ENCODE measurements at regions of chr16 and their contacts with region 1.

Region 1: GRCh38 chr16:67260426-67261075 is 11.8 kb downstream of the SLC9A5 start:
- DNase-seq: peak; percentile 69
- H3K4me3 Mint-ChIP-seq: no peak overlapping the region
- H3K27ac Mint-ChIP-seq: no peak overlapping the region
- H3K4me1 Mint-ChIP-seq: peaks cover 8% of the 10 kb centered on the region
- H3K27me3 Mint-ChIP-seq: peaks cover 42% of the 10 kb centered on the region
- CTCF ChIP-seq: peak; percentile 71

Region 2: GRCh38 chr16:65855171-65856145 is 1405.1 kb before region 1 on chr16:
- CTCF ChIA-PET with region 1: no interaction called
- intact Hi-C with region 1: no loop called
- DNase-seq: no peak
- H3K4me3 Mint-ChIP-seq: no peak overlapping the region
- H3K27ac Mint-ChIP-seq: no peak overlapping the region
- H3K4me1 Mint-ChIP-seq: no peaks in the 10 kb centered on the region
- H3K27me3 Mint-ChIP-seq: peaks cover 50% of the 10 kb centered on the region
- CTCF ChIP-seq: no peak

Region 3: DNA sequence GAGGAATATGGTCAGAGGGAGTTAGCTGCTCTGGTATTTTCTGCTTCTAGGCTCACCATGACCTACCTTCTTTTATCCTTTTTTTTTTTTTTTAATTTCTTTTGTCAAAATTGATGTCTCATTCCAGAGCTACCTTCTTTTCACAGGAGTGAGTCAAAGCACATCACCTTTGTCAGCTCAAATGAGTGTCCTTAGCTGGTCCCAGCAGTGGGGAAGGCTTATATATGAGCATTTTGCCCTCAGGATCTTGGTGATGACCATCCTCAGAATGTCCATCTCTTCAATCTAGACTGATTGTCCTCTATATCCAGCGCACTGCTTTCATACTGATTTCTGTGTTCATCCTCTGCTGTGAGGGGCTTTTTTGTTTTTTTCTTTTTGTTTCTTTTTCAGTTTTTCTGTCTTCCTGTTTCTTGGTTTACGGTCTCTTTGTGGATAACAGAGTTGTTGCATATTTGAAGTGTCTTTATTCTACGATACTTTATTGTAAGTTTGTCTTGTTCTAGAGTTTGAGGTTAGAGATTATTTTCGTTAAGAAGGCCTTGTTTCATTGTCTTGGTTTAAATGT is 206.7 kb before region 1 on chr16:
- CTCF ChIA-PET with region 1: no interaction called
- intact Hi-C with region 1: no loop called
- DNase-seq: no peak
- H3K4me3 Mint-ChIP-seq: no peak overlapping the region
- H3K27ac Mint-ChIP-seq: no peak overlapping the region
- H3K4me1 Mint-ChIP-seq: peaks cover 11% of the 10 kb centered on the region
- H3K27me3 Mint-ChIP-seq: no peaks in the 10 kb centered on the region
- CTCF ChIP-seq: no peak

Region 4: GRCh38 chr16:67150833-67151396 is 109.6 kb before region 1 on chr16 and contains the start of gene B3GNT9:
- CTCF ChIA-PET with region 1: no interaction called
- intact Hi-C with region 1: no loop called
- DNase-seq: peak; percentile 54
- H3K4me3 Mint-ChIP-seq: peak within 1 kb of the TSS; percentile 71
- H3K27ac Mint-ChIP-seq: no peak within 1 kb of the TSS
- H3K4me1 Mint-ChIP-seq: peaks cover 4% of the 10 kb centered on the region
- H3K27me3 Mint-ChIP-seq: no peaks in the 10 kb centered on the region
- CTCF ChIP-seq: no peak
- total RNA-seq, gene B3GNT9: 6.8 and 8.0 TPM in 2 replicates

Region 5: GRCh38 chr16:67246934-67247697 is 13.4 kb before region 1 on chr16 and contains the start of gene FHOD1:
- CTCF ChIA-PET with region 1: interaction called, 16 read pairs
- intact Hi-C with region 1: no loop called
- DNase-seq: peak; percentile 99
- H3K4me3 Mint-ChIP-seq: peak within 1 kb of the TSS; percentile 94
- H3K27ac Mint-ChIP-seq: peak within 1 kb of the TSS; percentile 85
- H3K4me1 Mint-ChIP-seq: peaks cover 54% of the 10 kb centered on the region
- H3K27me3 Mint-ChIP-seq: peaks cover 38% of the 10 kb centered on the region
- CTCF ChIP-seq: no peak
- total RNA-seq, gene FHOD1: 37.2 and 37.9 TPM in 2 replicates

Region 6: GRCh38 chr16:67284699-67285646 is 24.4 kb after region 1 on chr16:
- CTCF ChIA-PET with region 1: interaction called, 68 read pairs
- intact Hi-C with region 1: no loop called
- DNase-seq: peak; percentile 86
- H3K4me3 Mint-ChIP-seq: no peak overlapping the region
- H3K27ac Mint-ChIP-seq: no peak overlapping the region
- H3K4me1 Mint-ChIP-seq: peaks cover 9% of the 10 kb centered on the region
- H3K27me3 Mint-ChIP-seq: peaks cover 10% of the 10 kb centered on the region
- CTCF ChIP-seq: peak; percentile 85

Region 7: DNA sequence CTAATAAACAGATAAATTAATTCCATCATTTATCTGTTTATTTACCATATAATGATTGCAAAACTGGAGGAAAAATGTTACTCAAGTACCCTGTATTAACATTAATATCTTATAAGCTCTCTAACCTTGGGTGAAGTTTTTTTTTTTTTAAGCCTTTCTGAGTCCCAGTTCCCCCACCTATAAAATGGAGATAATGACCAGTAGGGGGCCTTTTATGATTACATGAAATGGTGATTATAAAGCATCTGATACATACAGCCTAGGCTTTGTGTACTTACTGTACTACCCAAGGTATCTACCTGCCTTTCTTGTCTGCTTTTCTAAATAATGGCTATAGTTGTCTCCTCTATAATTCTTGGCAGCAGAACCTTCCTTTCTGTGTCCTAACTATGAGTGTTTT is 88.6 kb after region 1 on chr16:
- CTCF ChIA-PET with region 1: interaction called, 12 read pairs
- intact Hi-C with region 1: no loop called
- DNase-seq: no peak
- H3K4me3 Mint-ChIP-seq: no peak overlapping the region
- H3K27ac Mint-ChIP-seq: no peak overlapping the region
- H3K4me1 Mint-ChIP-seq: peaks cover 25% of the 10 kb centered on the region
- H3K27me3 Mint-ChIP-seq: no peaks in the 10 kb centered on the region
- CTCF ChIP-seq: peak; percentile 52

Region 8: GRCh38 chr16:67415872-67416793 is 155.6 kb after region 1 on chr16 and contains the start of gene ZDHHC1:
- CTCF ChIA-PET with region 1: interaction called, 4 read pairs
- intact Hi-C with region 1: loop called (anchors 5 kb)
- DNase-seq: peak; percentile 92
- H3K4me3 Mint-ChIP-seq: peak within 1 kb of the TSS; percentile 75
- H3K27ac Mint-ChIP-seq: peak within 1 kb of the TSS; percentile 66
- H3K4me1 Mint-ChIP-seq: peaks cover 42% of the 10 kb centered on the region
- H3K27me3 Mint-ChIP-seq: peaks cover 15% of the 10 kb centered on the region
- CTCF ChIP-seq: peak; percentile 80
- total RNA-seq, gene ZDHHC1: 22.6 and 24.4 TPM in 2 replicates

Measured in Calu3 (cell line).